ENCODE measurements at regions of chr11 and their contacts with region 1.

Region 1: GRCh38 chr11:72722050-72722748 is 30.0 kb downstream of the ARAP1 start:
- DNase-seq: peak; percentile 94
- CTCF ChIP-seq: no peak

Region 2: GRCh38 chr11:72162888-72163492 is 559.2 kb before region 1 on chr11:
- in situ Hi-C with region 1: no loop called
- DNase-seq: no peak
- CTCF ChIP-seq: no peak

Region 3: GRCh38 chr11:72793425-72794367 is 71.5 kb after region 1 on chr11 and contains the start of gene STARD10:
- in situ Hi-C with region 1: loop called (anchors 5 kb)
- DNase-seq: peak; percentile 96
- CTCF ChIP-seq: peak; percentile 81

Region 4: GRCh38 chr11:72932132-72932570 is 210.0 kb after region 1 on chr11:
- in situ Hi-C with region 1: no loop called
- DNase-seq: no peak
- CTCF ChIP-seq: no peak

Region 5: DNA sequence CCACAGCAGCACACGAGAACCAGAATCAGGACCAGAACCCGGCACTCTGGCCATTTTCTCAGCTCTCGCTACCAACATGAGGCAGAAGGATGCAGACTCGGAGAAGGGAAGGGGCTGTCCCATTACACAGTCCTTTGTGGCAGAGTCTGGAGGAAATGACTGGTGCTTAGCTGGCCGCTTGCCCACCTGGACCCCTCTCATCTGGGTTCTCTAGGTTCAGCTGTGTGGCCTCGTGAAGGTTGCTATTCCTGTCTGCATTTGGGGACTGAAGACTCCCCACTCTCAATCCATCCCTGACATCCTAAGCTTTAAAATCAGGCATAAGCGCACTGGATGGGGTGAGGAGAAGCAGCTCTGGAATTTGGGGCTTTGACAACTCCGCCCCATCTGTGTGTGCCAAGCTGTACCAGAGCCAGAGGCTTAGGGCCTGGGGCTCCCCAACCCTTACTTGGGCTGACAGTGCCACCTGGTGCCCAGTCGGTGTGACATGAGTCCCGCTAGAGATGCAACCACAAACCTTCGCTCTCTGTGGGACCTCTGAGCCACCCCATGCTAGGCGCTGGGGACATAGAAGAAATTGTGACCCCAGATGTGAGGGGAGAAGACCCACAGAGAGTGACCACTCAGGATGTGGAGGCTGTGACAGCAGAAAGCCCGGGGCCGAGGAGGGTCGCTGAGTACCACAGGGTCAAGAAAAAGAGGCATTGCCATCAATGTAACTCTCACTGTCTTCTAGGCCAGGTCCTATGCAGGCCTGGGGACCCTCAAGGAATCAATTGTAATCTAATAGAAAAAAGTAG is 455.8 kb after region 1 on chr11:
- in situ Hi-C with region 1: loop called (anchors 25 kb)
- DNase-seq: peak; percentile 87
- CTCF ChIP-seq: peak; percentile 86

Measured in GM13977 (cell line).